ENCODE measurements at regions of chr21 and their contacts with region 1.

Region 1: GRCh38 chr21:32929633-32930038 is 96.1 kb upstream of the OLIG2 start:
- DNase-seq: peak in 1 of 35 experiments; percentile 24
- ATAC-seq: no peak
- H3K4me3 ChIP-seq: no peak overlapping the region
- H3K4me3 Mint-ChIP-seq: peak overlapping the region in 1 of 3 donors; percentile 31
- H3K27ac ChIP-seq: peak overlapping the region; percentile 46
- H3K27ac Mint-ChIP-seq: peak overlapping the region; percentile 79 to 82
- H3K4me1 ChIP-seq: peaks cover 11 to 48% of the 10 kb centered on the region in 2 experiments
- H3K4me1 Mint-ChIP-seq: peaks cover 27 to 37% (median 35%) of the 10 kb centered on the region in 3 donors
- H3K27me3 ChIP-seq: no peaks in the 10 kb centered on the region
- H3K27me3 Mint-ChIP-seq: no peaks in the 10 kb centered on the region

Region 2: GRCh38 chr21:32834916-32835235 is 94.8 kb before region 1 on chr21:
- CTCF ChIA-PET with region 1: interaction called in 1 of 2 experiments, 16 read pairs
- POLR2A ChIA-PET with region 1: no interaction called
- DNase-seq: no peak
- ATAC-seq: no peak
- H3K4me3 ChIP-seq: no peak overlapping the region
- H3K4me3 Mint-ChIP-seq: no peak overlapping the region
- H3K27ac ChIP-seq: no peak overlapping the region
- H3K27ac Mint-ChIP-seq: no peak overlapping the region
- H3K4me1 ChIP-seq: no peaks in the 10 kb centered on the region
- H3K4me1 Mint-ChIP-seq: no peaks in the 10 kb centered on the region
- H3K27me3 ChIP-seq: peaks cover 0 to 6% of the 10 kb centered on the region in 2 experiments
- H3K27me3 Mint-ChIP-seq: peaks cover 4 to 9% of the 10 kb centered on the region in 2 donors

Region 3: GRCh38 chr21:32914424-32915039 is 15.1 kb before region 1 on chr21:
- CTCF ChIA-PET with region 1: no interaction called
- POLR2A ChIA-PET with region 1: no interaction called
- DNase-seq: peak in 4 of 35 experiments; percentile 1 to 43 (median 18)
- ATAC-seq: peak; percentile 83 to 93 (median 86)
- H3K4me3 ChIP-seq: no peak overlapping the region
- H3K4me3 Mint-ChIP-seq: peak overlapping the region in 2 of 3 donors; percentile 0 to 62
- H3K27ac ChIP-seq: peak overlapping the region; percentile 37
- H3K27ac Mint-ChIP-seq: peak overlapping the region; percentile 62 to 68
- H3K4me1 ChIP-seq: peaks cover 20% of the 10 kb centered on the region in 2 experiments
- H3K4me1 Mint-ChIP-seq: peaks cover 29 to 42% (median 34%) of the 10 kb centered on the region in 3 donors
- H3K27me3 ChIP-seq: no peaks in the 10 kb centered on the region
- H3K27me3 Mint-ChIP-seq: no peaks in the 10 kb centered on the region

Region 4: DNA sequence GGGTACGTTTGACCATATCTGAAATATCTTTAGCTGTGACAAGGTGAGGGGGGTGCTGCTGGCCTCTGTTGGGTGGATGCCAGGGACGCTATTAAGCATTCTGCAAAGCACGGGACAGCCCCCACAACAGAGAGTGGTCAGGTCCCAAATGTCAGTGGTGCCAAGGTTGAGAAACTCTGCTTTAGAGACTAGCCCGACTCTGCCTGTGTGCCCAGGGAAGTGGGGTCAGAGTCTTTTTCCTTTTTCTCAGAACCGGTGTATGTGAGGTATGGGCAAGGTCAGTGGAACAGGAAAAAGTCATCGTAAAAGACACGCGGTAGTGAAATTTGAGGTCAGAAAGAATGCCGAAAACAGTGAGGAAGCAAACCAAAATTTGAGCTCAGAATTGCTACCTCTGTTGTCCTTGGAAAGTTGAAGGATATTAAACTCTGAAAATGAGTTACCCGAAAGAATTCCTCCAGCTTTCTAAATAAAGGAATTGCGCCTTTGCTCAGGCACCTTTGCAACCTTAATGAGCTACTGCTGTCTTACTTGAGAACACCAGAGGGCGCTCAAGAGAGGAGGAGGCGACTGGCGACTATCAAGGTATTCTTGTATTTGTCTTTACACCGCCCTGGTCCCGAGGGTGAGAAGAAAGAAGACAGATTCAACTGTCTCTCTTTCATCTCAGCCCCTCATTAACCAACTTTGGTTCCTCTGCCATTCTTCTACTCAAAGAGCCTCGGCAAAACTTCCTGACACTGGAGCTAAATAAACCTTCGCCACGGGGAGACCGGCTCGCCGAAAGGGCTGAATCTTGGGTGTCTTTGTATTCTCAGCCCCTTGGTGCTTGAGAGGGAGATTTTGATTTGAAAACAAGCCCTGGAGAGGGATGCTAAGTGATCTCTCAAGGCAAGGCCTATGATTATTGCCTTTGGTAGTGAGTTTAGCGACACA is 10.7 kb after region 1 on chr21:
- CTCF ChIA-PET with region 1: interaction called, 6 to 10 read pairs
- POLR2A ChIA-PET with region 1: no interaction called
- DNase-seq: peak in 28 of 35 experiments; percentile 4 to 79 (median 28)
- ATAC-seq: peak in 2 of 4 experiments; percentile 47 to 69
- H3K4me3 ChIP-seq: no peak overlapping the region
- H3K4me3 Mint-ChIP-seq: no peak overlapping the region
- H3K27ac ChIP-seq: no peak overlapping the region
- H3K27ac Mint-ChIP-seq: no peak overlapping the region
- H3K4me1 ChIP-seq: peaks cover 0 to 3% of the 10 kb centered on the region in 2 experiments
- H3K4me1 Mint-ChIP-seq: peaks cover 0 to 7% (median 4%) of the 10 kb centered on the region in 3 donors
- H3K27me3 ChIP-seq: peaks cover 0 to 12% of the 10 kb centered on the region in 2 experiments
- H3K27me3 Mint-ChIP-seq: peaks cover 0 to 4% of the 10 kb centered on the region in 2 donors

Region 5: DNA sequence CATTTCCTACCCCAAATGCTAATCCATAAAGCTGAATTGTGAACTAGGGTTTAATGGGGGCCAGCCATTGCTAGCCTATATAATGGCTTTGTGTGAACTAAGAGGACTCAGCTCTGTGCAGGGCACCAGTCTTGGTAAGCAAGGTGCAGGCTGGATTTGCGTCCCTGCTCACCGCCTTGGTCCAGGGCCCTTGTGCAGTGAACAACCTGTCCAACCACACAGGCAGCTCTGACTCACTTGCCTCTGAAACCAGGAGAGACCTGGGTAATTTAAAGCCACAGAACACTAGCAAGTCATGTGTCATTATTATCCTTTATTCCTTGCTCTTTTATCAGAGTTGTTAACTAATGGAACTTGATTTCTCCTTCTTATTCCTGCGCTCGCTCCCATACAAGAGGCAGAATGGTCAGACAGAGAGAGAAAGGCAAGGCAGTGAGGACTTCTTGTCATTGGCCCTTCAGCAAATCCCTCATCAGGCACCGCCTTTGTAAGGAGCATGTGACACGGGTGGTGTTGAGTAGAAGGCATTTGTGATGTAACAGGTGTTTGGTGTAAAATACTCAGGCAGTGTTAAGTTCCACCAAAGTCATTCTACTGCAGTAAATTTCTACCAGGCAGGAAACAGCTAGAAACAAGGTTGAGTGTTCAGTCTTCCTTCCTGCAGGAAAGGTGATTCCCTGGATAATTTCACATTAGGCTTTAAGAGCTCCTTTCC is 28.8 kb after region 1 on chr21:
- CTCF ChIA-PET with region 1: no interaction called
- POLR2A ChIA-PET with region 1: no interaction called
- DNase-seq: no peak
- ATAC-seq: no peak
- H3K4me3 ChIP-seq: no peak overlapping the region
- H3K4me3 Mint-ChIP-seq: no peak overlapping the region
- H3K27ac ChIP-seq: no peak overlapping the region
- H3K27ac Mint-ChIP-seq: no peak overlapping the region
- H3K4me1 ChIP-seq: no peaks in the 10 kb centered on the region
- H3K4me1 Mint-ChIP-seq: peaks cover 0 to 2% (median 0%) of the 10 kb centered on the region in 3 donors
- H3K27me3 ChIP-seq: peaks cover 10 to 31% of the 10 kb centered on the region in 2 experiments
- H3K27me3 Mint-ChIP-seq: peaks cover 56 to 58% of the 10 kb centered on the region in 2 donors